Activated naive CD4-positive, alpha-beta T cell treated with anti-CD3 and anti-CD28 coated beads, Interleukin-2, amount 10 ng/mL, durations not matched to agents 7 days and 5 days (primary cell): ENCODE measurements at regions of chr17 and their contacts with region 1.

Region 1: DNA sequence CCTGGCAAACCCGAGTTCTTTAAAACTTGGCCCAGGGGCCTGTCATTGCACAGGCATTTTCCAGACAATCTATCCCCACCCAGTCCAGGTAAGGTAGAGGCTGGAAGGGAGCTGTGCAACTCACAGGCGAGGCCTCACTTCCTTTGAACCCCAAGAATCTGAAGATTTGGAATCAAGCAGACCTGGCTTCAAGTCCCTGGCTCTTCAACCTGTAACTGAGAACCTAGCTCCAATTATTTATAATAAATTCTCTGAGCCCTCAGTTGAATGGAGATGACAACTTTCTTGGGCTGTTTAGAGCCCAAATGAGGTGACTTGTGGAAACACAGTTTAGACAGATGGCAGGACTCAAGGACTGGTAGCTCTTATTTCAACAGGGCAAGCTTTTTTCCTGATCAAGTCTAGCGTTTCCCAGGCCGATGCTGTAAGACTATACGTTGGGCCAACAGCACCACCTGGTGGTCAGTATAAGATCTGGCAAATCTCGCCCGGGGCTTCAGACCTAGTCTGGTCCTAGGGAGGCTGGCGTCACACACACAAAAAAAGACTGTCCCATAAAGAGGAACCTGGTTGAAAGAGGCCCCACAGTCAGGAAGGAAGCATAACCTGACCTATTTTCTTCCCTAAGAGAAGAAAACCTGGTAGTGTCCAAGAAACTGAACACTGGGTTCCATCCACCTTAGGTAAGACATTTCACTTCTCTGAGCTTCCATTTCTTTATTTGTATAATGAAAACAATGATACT is 117.9 kb downstream of the C17orf67 start:
- DNase-seq: peak; percentile 84
- H3K4me3 Mint-ChIP-seq: no peak overlapping the region
- H3K27ac Mint-ChIP-seq: no peak overlapping the region
- H3K4me1 Mint-ChIP-seq: peaks cover 23% of the 10 kb centered on the region
- H3K27me3 Mint-ChIP-seq: peaks cover 5% of the 10 kb centered on the region

Region 2: DNA sequence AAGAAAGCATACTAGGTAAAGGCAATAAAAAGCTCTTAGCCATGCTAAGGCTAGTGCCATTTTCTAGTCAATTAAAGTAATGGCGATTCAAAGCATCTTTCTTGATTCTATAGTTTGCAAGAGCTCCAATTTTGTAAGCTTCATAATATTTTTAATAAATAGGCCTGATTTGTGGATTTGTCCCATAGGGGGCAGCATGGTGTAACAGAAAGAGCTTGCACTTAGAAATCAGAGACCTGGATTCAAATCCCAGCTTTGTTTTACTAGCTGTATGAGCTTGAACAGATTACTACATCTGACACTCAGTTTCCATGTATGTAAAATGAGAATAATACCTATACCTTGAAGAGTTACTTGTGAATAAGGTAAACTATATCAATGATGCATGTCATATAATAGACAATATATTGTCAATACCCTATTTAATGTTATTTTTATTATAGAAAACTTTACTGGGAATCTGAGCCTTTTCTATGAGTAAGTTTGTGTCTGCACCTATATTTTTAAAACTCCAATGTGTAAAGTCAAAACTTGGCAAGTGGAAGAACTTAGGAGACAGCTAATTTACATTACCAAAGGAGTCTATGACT is 215.9 kb before region 1 on chr17:
- CTCF ChIA-PET with region 1: interaction called, 45 read pairs
- DNase-seq: peak; percentile 48
- H3K4me3 Mint-ChIP-seq: no peak overlapping the region
- H3K27ac Mint-ChIP-seq: no peak overlapping the region
- H3K4me1 Mint-ChIP-seq: no peaks in the 10 kb centered on the region
- H3K27me3 Mint-ChIP-seq: peaks cover 12% of the 10 kb centered on the region

Region 3: DNA sequence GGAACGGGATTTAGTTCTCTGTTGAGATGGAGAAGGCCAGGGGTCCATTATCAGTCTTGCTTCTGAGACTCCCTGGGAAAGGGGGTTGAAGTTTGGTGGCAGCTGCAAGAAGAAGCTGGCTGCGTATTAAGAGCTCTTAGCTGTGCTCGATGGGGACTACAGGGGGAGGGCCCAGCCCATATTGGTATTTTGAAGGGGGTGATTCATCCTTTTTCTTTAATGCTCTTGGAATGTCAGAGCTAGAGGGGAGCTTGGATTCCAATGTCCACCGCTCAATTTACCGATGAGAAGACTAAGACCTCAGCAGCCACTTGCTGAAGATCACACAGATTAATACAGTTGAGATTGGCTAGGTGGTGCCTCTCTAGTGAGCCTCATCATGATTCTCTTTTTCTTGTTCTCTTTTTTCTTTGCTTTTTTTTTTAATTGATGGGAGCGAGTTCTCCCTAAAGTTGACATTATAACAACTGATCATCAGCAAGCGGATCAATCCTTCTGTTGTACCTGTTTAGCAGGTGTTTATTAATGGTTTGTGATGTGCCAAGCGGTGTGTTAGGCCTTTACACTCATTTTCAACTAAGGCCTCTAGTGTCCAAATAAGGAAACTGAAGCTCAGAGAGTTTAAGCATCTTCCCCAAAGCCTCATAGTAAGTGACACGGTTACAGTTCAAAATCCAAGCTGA is 117.2 kb before region 1 on chr17:
- CTCF ChIA-PET with region 1: interaction called, 93 read pairs
- DNase-seq: no peak
- H3K4me3 Mint-ChIP-seq: peak overlapping the region; percentile 12
- H3K27ac Mint-ChIP-seq: peak overlapping the region; percentile 83
- H3K4me1 Mint-ChIP-seq: peaks cover 81% of the 10 kb centered on the region
- H3K27me3 Mint-ChIP-seq: peaks cover 48% of the 10 kb centered on the region

Region 4: GRCh38 chr17:56679115-56679766 is 36.5 kb before region 1 on chr17:
- CTCF ChIA-PET with region 1: interaction called, 35 read pairs
- DNase-seq: no peak
- H3K4me3 Mint-ChIP-seq: no peak overlapping the region
- H3K27ac Mint-ChIP-seq: no peak overlapping the region
- H3K4me1 Mint-ChIP-seq: peaks cover 15% of the 10 kb centered on the region
- H3K27me3 Mint-ChIP-seq: peaks cover 52% of the 10 kb centered on the region

Region 5: GRCh38 chr17:56754523-56755208 is 38.9 kb after region 1 on chr17:
- CTCF ChIA-PET with region 1: interaction called, 25 read pairs
- DNase-seq: peak; percentile 51
- H3K4me3 Mint-ChIP-seq: no peak overlapping the region
- H3K27ac Mint-ChIP-seq: peak overlapping the region; percentile 81
- H3K4me1 Mint-ChIP-seq: peaks cover 39% of the 10 kb centered on the region
- H3K27me3 Mint-ChIP-seq: no peaks in the 10 kb centered on the region